Ovary (tissue), 10 donors: ENCODE measurements at regions of chr20 and their contacts with region 1.

Region 1: DNA sequence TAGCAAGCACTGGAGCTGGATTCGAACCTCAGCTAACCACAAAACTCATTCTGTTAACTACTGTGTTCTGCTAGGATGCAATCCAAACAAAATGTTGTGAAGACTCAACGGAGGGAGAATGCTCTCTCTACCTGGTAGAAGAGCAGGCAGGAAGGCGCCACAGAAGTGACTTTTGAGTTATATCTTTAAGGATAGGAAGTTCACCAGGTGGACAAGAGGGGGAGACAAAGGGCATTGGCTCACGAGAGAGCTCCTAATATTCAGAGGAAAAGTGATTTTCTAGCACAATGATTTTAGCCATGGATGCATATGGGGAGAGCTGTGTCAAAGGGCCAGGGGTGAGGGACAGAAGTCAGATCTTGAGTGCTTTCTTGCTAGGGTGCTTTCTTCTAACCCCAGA is 108.4 kb upstream of the MAFB start:
- DNase-seq: no peak
- H3K4me3 ChIP-seq: no peak overlapping the region
- H3K27ac ChIP-seq: no peak overlapping the region
- H3K4me1 ChIP-seq: no peaks in the 10 kb centered on the region
- H3K27me3 ChIP-seq: no peaks in the 10 kb centered on the region
- CTCF ChIP-seq: no peak
- EP300 ChIP-seq: no peak
- POLR2A ChIP-seq: no peak

Region 2: DNA sequence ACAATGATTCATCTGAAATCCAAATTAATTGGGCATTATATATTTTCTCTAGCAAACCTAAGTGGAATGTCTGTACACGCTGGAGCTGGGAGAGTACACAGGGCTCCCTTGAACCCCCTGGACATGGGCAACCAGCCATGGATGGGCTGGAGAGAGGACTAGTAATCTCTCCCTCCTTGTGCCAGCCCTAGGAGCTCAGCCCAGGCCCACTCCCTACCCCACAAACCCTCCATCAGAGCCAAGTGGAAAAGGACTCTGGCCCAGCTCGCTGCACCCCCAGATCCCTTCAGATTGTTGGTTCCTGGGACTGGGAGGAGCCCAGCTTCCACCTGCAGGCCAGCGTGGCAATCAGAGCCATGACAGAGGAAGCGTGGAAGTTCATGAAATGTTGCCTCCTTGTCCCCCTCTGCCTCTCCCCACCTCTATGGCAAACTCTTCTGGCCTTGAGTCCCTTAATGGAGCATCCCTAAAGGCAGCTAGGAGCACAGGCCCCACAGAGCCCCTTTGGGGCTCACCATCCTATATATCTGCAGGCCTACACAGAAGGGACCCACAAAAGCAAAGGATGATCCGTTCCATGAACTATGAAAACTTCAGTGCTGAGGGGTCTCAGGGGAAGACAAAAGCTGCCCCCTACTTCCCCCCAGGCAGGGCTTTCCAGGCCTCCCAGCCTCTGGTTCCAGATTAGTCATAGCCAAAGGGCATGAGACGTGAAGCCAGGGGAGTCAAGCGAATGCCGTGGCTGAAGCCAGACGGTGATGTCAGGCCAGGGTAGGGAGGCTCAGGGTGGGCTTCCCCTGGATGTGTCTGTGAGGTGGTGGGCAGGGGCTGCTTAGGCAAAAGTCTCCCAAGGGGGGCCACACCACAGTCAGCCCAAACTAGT is 18.0 kb after region 1 on chr20:
- intact Hi-C with region 1: no loop called
- DNase-seq: no peak
- H3K4me3 ChIP-seq: no peak overlapping the region
- H3K27ac ChIP-seq: no peak overlapping the region
- H3K4me1 ChIP-seq: no peaks in the 10 kb centered on the region
- H3K27me3 ChIP-seq: no peaks in the 10 kb centered on the region
- CTCF ChIP-seq: no peak
- EP300 ChIP-seq: no peak
- POLR2A ChIP-seq: no peak

Region 3: GRCh38 chr20:40945754-40946450 is 148.5 kb after region 1 on chr20:
- intact Hi-C with region 1: loop called in 1 of 4 experiments (anchors 10 kb)
- DNase-seq: peak; percentile 18 to 59 (median 41)
- H3K4me3 ChIP-seq: no peak overlapping the region
- H3K27ac ChIP-seq: no peak overlapping the region
- H3K4me1 ChIP-seq: no peaks in the 10 kb centered on the region
- H3K27me3 ChIP-seq: no peaks in the 10 kb centered on the region
- CTCF ChIP-seq: no peak
- EP300 ChIP-seq: no peak
- POLR2A ChIP-seq: no peak